Ascending aorta (tissue), 2 donors: ENCODE measurements at regions of chrX and their contacts with region 1.

Region 1: DNA sequence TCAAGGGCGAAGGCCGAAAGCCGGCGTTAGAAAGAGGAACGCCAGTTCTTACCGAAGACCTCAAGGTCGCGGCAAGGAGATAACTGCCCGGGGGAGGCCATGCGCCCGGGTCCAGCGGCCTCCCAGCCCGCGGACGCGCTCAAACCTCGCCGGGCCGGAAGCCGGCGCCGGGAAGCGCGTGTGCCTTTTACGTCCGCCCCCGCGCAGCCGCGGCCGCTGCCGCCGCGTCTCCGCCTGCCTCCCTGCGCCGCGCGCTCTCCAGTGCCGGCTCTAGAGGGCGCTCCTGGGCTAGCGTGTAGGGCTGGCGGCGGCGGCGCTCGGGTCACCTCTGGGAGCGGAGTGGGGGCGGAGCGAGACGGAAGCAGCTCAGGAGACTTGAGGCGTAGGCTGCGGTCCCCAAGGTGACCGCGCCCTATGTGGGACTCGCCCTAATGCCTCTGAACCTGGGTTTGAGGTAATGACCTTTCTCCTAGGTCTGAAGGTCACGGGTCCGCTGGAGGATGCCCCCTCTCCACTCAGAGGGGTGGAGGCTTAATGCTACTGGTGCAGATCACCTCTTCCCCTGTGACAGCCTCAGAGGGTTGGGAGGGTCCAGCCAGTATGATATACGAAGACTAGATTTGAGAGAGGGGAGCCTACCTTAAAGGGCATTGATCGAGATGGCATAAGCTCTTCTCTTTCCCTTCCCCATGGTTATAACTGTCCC is 839 bp downstream of the SLC25A5 start:
- DNase-seq: peak; percentile 25 to 93
- H3K4me3 ChIP-seq: peak overlapping the region; percentile 83 to 85
- H3K27ac ChIP-seq: peak overlapping the region; percentile 94 to 95
- H3K4me1 ChIP-seq: peaks cover 0 to 3% of the 10 kb centered on the region in 2 donors
- H3K27me3 ChIP-seq: no peaks in the 10 kb centered on the region
- CTCF ChIP-seq: peak; percentile 46 to 75 (median 68)

Region 2: GRCh38 chrX:119228512-119229252 is 240.4 kb before region 1 on chrX:
- intact Hi-C with region 1: no loop called
- DNase-seq: no peak
- H3K4me3 ChIP-seq: no peak overlapping the region
- H3K27ac ChIP-seq: no peak overlapping the region
- H3K4me1 ChIP-seq: no peaks in the 10 kb centered on the region
- H3K27me3 ChIP-seq: no peaks in the 10 kb centered on the region
- CTCF ChIP-seq: no peak

Region 3: DNA sequence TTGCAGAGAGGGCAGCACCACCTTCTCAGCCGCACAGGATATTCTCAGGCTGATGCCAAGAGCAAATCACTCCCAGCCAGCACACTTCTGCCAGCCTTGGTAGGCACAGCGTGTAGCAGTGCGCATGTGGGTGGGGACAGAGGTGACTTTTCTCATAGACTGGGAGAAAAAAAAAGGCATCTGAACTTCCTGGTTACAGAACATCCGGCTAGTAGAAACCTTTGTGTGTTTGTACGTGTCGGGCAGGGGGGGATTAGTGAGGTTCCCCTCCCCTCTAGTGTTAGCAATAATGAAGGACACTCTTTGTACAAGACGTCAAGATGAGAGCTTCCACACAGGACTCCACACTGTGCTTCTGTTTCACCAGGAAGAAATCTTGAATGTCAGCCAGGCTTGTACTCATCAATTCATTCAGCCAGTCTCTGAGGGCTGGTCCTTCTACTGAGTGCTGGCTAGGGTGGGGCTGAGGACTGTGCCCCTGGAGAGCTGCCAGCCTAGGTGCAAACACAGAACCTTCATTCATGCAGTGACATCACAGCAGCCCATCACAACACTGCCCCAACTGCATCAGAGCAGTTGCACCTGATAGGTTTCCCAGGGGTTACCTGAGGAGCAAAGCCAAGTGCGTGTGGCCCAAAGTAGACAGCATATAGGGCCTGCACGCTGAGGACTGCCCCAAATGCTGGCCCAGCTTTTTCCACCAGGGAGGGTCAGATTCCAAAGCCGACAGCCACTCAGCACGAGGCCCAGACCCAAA is 33.8 kb after region 1 on chrX:
- intact Hi-C with region 1: loop called (anchors 2 kb)
- DNase-seq: no peak
- H3K4me3 ChIP-seq: no peak overlapping the region
- H3K27ac ChIP-seq: peak overlapping the region; percentile 67 to 90
- H3K4me1 ChIP-seq: peaks cover 0 to 11% of the 10 kb centered on the region in 2 donors
- H3K27me3 ChIP-seq: no peaks in the 10 kb centered on the region
- CTCF ChIP-seq: no peak

Region 4: GRCh38 chrX:119565107-119565663 is 96.1 kb after region 1 on chrX and contains the start of gene STEEP1:
- intact Hi-C with region 1: loop called (anchors 5 kb)
- DNase-seq: peak; percentile 50 to 93
- H3K4me3 ChIP-seq: peak within 1 kb of the TSS; percentile 39 to 67
- H3K27ac ChIP-seq: peak within 1 kb of the TSS; percentile 64 to 76
- H3K4me1 ChIP-seq: no peaks in the 10 kb centered on the region
- H3K27me3 ChIP-seq: no peaks in the 10 kb centered on the region
- CTCF ChIP-seq: no peak
- total RNA-seq, gene STEEP1: 22.2 TPM

Region 5: DNA sequence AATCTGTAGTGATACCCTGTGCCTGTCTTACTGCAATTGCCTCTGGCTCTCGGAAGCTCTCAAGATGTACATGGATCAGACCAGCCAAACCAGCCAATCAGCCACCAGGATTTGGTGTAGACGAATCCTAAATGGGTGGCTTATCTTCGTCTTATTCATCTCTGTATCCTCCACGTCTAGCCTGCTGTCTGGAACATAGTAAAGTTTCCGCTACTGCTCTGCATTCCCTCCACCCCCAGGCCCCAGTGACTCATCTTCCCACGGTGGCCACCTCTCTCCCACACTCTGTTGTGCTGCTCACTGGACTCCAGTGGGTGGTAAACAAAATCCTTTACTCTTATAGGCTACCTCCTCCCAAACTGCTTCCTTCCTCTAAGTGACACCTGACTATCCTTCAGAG is 186.0 kb after region 1 on chrX:
- intact Hi-C with region 1: no loop called
- DNase-seq: no peak
- H3K4me3 ChIP-seq: no peak overlapping the region
- H3K27ac ChIP-seq: no peak overlapping the region
- H3K4me1 ChIP-seq: no peaks in the 10 kb centered on the region
- H3K27me3 ChIP-seq: no peaks in the 10 kb centered on the region
- CTCF ChIP-seq: no peak

Region 6: GRCh38 chrX:119791438-119792231 is 322.6 kb after region 1 on chrX and contains the start of gene RPL39:
- intact Hi-C with region 1: loop called (anchors 1 kb)
- DNase-seq: peak; percentile 45 to 88
- H3K4me3 ChIP-seq: peak within 1 kb of the TSS; percentile 59 to 82
- H3K27ac ChIP-seq: peak within 1 kb of the TSS; percentile 88 to 95
- H3K4me1 ChIP-seq: peaks cover 2 to 13% of the 10 kb centered on the region in 2 donors
- H3K27me3 ChIP-seq: no peaks in the 10 kb centered on the region
- CTCF ChIP-seq: no peak
- total RNA-seq, gene RPL39: 2,929 TPM

Region 7: DNA sequence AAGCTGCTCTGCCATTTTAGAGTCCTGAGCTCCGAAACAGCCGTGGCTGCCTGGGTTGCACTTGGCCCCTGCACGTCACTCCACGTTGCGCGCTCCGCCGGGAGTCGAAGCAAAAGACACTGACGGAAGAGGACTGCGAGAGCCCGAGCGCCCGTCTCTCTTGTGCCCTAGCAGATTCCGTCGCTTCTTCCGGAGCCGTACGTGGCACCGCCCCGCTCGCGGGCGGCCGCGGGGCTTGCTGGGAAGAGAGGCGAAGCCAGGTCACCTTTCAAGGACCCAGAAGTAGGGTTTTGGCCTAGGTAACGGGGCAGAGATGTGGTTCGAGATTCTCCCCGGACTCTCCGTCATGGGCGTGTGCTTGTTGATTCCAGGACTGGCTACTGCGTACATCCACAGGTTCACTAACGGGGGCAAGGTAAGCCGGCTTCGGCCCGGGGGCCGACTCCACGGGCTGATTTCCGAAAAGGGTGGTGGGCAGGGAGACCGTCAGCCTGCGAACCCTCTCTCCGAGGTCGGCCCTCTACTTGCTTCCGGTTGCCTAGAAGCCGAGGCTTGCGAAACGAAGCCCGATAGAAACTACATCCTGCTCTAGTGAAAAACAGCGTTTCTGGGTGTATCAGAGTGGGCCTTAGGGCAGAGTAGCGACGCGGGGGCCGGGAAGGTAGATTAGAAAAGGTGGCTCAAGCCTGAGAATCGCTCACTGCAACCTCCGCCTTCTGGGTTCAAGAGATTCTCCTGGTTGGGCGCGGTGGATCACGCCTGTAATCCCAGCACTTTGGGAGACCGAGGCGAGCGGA is 402.7 kb after region 1 on chrX and contains the starts of genes NDUFA1 and RNF113A:
- intact Hi-C with region 1: loop called (anchors 5 kb)
- DNase-seq: peak; percentile 31 to 89
- H3K4me3 ChIP-seq: peak within 1 kb of the TSS; percentile 54 to 66
- H3K27ac ChIP-seq: peak within 1 kb of the TSS; percentile 90 to 93
- H3K4me1 ChIP-seq: peaks cover 0 to 5% of the 10 kb centered on the region in 2 donors
- H3K27me3 ChIP-seq: no peaks in the 10 kb centered on the region
- CTCF ChIP-seq: no peak
- total RNA-seq, gene NDUFA1: 24.5 TPM
- total RNA-seq, gene RNF113A: 8.8 TPM